ENCODE measurements at regions of chr1 and their contacts with region 1.

Region 1: DNA sequence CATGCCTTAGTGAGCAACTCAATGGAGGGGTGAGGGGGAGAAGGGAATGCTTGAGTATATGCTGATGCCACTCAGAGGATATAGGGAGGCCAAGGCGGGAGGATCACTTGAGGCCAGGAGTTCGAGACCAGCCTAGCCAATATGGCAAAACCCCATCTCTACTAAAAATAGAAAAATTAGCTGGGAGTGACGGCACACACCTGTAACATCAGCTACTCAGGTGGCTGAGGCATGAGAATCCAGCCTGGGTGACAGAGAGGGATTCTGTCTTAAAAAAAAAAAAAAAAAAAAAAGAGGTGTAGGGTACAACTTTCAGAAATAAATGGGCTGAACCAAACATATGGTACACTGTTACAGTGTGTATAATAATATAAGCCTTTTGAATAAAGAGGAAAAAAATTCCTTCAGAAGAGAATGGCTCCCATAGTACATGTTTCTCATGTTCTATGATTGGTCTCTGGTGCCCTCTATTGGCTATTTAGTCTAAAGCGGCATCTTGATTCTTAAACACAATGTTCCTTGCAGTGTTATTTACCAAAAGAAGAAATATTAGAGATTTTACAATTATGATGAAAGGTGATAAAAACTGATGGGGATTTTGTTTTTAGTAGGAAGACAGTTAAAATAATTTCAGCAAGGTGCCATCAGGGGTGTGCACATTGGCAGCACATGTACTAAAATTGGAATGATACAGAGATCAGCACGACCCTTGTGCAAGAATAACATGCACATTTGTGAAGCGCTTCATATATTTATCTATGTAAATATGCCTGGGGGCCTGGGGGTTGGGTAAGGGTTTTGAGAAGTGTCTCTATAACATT is 109.8 kb downstream of the PATJ start:
- DNase-seq: peak; percentile 20
- H3K4me3 Mint-ChIP-seq: no peak overlapping the region
- H3K27ac Mint-ChIP-seq: no peak overlapping the region
- H3K4me1 Mint-ChIP-seq: no peaks in the 10 kb centered on the region
- H3K27me3 Mint-ChIP-seq: no peaks in the 10 kb centered on the region
- CTCF ChIP-seq: peak; percentile 59

Region 2: GRCh38 chr1:60969971-60970509 is 882.0 kb before region 1 on chr1:
- CTCF ChIA-PET with region 1: no interaction called
- intact Hi-C with region 1: loop called (anchors 5 kb)
- DNase-seq: no peak
- H3K4me3 Mint-ChIP-seq: no peak overlapping the region
- H3K27ac Mint-ChIP-seq: no peak overlapping the region
- H3K4me1 Mint-ChIP-seq: peaks cover 28% of the 10 kb centered on the region
- H3K27me3 Mint-ChIP-seq: peaks cover 11% of the 10 kb centered on the region
- CTCF ChIP-seq: no peak

Region 3: DNA sequence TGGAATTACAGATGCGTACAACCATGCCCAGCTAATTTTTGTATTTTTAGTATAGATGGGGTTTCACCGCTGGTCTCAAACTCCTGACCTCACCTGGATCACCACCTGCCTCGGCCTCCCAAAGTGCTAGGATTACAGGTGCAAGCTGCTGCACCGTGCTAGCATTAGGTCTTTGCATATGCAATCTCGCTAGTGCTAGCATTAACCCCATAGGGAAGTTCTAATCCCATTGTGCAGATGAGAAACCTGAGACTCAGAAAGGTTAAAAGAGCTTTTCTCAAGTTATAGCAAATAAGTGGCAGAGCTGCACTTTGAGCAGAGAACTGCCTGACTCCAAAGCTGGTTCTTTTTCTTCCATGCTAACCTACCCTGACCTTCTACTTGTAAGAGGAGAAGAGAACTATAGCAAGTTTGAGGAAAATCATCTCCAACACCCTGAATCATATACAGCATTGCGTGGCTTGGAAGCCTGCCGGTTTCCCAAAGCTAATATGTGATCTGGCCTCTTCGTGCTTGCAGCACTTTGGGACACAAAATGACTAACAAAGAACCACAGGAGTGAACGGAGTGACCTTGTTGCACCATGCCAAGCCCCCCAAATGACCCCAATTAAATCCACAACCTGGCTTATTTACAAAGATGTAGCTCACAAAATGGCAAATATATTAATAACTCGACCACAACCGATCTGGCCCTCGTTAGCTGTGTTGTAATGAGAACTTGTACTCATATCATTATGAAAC is 312.2 kb before region 1 on chr1:
- CTCF ChIA-PET with region 1: no interaction called
- intact Hi-C with region 1: loop called (anchors 5 kb)
- DNase-seq: no peak
- H3K4me3 Mint-ChIP-seq: no peak overlapping the region
- H3K27ac Mint-ChIP-seq: no peak overlapping the region
- H3K4me1 Mint-ChIP-seq: no peaks in the 10 kb centered on the region
- H3K27me3 Mint-ChIP-seq: peaks cover 18% of the 10 kb centered on the region
- CTCF ChIP-seq: no peak

Region 4: DNA sequence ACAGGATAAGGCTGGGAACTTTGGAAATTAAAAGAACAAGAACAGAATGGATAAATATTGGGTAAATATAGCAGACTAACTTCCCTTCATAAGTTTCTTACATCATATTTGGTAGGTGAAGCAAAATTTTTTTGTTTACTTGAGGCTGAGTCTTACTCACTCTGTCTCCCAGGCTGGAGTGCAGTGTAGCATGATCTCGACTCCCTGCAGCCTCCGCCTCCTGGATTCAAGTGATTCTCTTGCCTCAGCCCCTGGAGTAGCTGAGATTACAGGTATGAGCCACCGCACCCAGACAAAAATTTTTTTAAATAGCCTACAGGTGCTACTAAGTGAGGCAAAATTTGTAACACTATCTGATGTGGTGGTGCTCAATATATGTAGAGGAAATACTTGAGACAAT is 177.8 kb before region 1 on chr1:
- CTCF ChIA-PET with region 1: no interaction called
- intact Hi-C with region 1: loop called (anchors 5 kb)
- DNase-seq: no peak
- H3K4me3 Mint-ChIP-seq: no peak overlapping the region
- H3K27ac Mint-ChIP-seq: no peak overlapping the region
- H3K4me1 Mint-ChIP-seq: no peaks in the 10 kb centered on the region
- H3K27me3 Mint-ChIP-seq: no peaks in the 10 kb centered on the region
- CTCF ChIP-seq: no peak

Region 5: DNA sequence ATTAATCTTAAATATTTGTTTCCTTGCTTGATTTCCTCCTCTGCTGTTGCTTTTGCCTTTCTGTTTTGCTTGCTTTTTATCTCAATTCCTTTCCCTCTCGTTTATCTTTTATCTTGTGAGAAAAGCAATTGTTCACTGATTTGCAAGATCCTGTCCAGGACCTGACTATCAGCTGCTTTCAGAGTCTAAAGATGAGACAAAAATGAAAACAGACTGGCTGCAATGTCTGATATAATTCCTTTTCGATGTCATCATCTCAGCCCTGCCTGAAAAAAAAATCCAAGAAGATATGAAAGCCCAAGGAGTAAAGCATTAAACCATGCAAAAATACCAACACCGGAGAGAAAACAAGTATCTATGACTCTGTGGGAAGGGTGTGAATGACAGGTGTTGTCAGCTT is 115.7 kb after region 1 on chr1:
- CTCF ChIA-PET with region 1: no interaction called
- intact Hi-C with region 1: no loop called
- DNase-seq: no peak
- H3K4me3 Mint-ChIP-seq: no peak overlapping the region
- H3K27ac Mint-ChIP-seq: no peak overlapping the region
- H3K4me1 Mint-ChIP-seq: no peaks in the 10 kb centered on the region
- H3K27me3 Mint-ChIP-seq: no peaks in the 10 kb centered on the region
- CTCF ChIP-seq: no peak

Measured in Calu3 (cell line).